ENCODE measurements at regions of chr3 and their contacts with region 1.

Region 1: GRCh38 chr3:124688581-124689454 is 41.4 kb upstream of the UMPS start:
- DNase-seq: peak; percentile 43 to 87
- H3K4me3 ChIP-seq: no peak overlapping the region
- H3K27ac ChIP-seq: no peak overlapping the region
- H3K4me1 ChIP-seq: no peaks in the 10 kb centered on the region
- H3K27me3 ChIP-seq: no peaks in the 10 kb centered on the region
- CTCF ChIP-seq: peak; percentile 72 to 86 (median 85)
- EP300 ChIP-seq: no peak
- POLR2A ChIP-seq: no peak
- RAD21 ChIP-seq: peak; percentile 87 to 91

Region 2: GRCh38 chr3:124569761-124570160 is 119.1 kb before region 1 on chr3:
- CTCF ChIA-PET with region 1: interaction called, 144 read pairs
- POLR2A ChIA-PET with region 1: interaction called, 6 read pairs
- DNase-seq: no peak
- H3K4me3 ChIP-seq: no peak overlapping the region
- H3K27ac ChIP-seq: no peak overlapping the region
- H3K4me1 ChIP-seq: no peaks in the 10 kb centered on the region; a peak in 1 of 7 replicates
- H3K27me3 ChIP-seq: peaks cover 0 to 2% (median 0%) of the 10 kb centered on the region in 4 experiments; a peak in 2 of 7 replicates
- CTCF ChIP-seq: no peak
- EP300 ChIP-seq: no peak
- POLR2A ChIP-seq: no peak
- RAD21 ChIP-seq: no peak

Region 3: GRCh38 chr3:124584552-124585391 is 104.0 kb before region 1 on chr3:
- CTCF ChIA-PET with region 1: interaction called, 11 read pairs
- POLR2A ChIA-PET with region 1: no interaction called
- DNase-seq: peak in 1 of 2 experiments; percentile 87
- H3K4me3 ChIP-seq: peak overlapping the region; percentile 48 to 65 (median 61)
- H3K27ac ChIP-seq: no peak overlapping the region
- H3K4me1 ChIP-seq: peaks cover 8 to 22% (median 15%) of the 10 kb centered on the region in 4 experiments
- H3K27me3 ChIP-seq: peaks cover 12 to 34% (median 31%) of the 10 kb centered on the region in 4 experiments
- CTCF ChIP-seq: no peak
- EP300 ChIP-seq: no peak
- POLR2A ChIP-seq: no peak
- RAD21 ChIP-seq: no peak

Region 4: GRCh38 chr3:124634210-124635168 is 54.3 kb before region 1 on chr3:
- CTCF ChIA-PET with region 1: interaction called, 21 read pairs
- POLR2A ChIA-PET with region 1: interaction called, 3 read pairs
- DNase-seq: no peak
- H3K4me3 ChIP-seq: no peak overlapping the region
- H3K27ac ChIP-seq: no peak overlapping the region
- H3K4me1 ChIP-seq: peaks cover 4 to 23% (median 13%) of the 10 kb centered on the region in 4 experiments
- H3K27me3 ChIP-seq: no peaks in the 10 kb centered on the region; a peak in 1 of 7 replicates
- CTCF ChIP-seq: no peak
- EP300 ChIP-seq: no peak
- POLR2A ChIP-seq: no peak
- RAD21 ChIP-seq: no peak

Region 5: DNA sequence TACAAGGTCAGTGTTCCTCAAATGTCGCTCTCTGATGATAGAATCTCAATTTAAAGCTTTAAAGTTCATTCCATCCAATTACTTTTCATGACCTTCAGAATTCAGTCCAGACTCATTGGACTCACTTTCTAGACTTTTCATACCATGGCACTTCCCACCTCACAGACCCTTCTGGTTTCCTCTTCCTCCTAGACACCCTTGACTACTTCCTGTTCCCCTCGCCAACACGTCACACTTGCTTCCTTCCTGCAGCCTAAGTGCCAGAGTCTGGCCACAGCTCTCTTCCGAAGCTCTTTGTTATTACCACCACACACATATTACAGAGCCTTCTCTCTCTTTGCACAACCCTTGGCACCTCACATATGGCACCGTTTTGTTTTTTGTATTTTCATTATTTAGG is 17.7 kb before region 1 on chr3:
- CTCF ChIA-PET with region 1: interaction called, 33 read pairs
- POLR2A ChIA-PET with region 1: no interaction called
- DNase-seq: no peak
- H3K4me3 ChIP-seq: no peak overlapping the region
- H3K27ac ChIP-seq: no peak overlapping the region
- H3K4me1 ChIP-seq: no peaks in the 10 kb centered on the region
- H3K27me3 ChIP-seq: no peaks in the 10 kb centered on the region
- CTCF ChIP-seq: no peak
- EP300 ChIP-seq: no peak
- POLR2A ChIP-seq: no peak
- RAD21 ChIP-seq: no peak

Measured in H1 (cell line).